ENCODE measurements at regions of chr19 and their contacts with region 1.

Region 1: GRCh38 chr19:37466798-37467607 is at the start of gene ZNF569:
- DNase-seq: peak; percentile 94
- H3K4me3 ChIP-seq: peak within 1 kb of the TSS; percentile 70 to 86
- H3K27ac ChIP-seq: peak within 1 kb of the TSS; percentile 89 to 95
- H3K4me1 ChIP-seq: no peaks in the 10 kb centered on the region
- H3K27me3 ChIP-seq: no peaks in the 10 kb centered on the region
- CTCF ChIP-seq: no peak
- POLR2A ChIP-seq: no peak
- total RNA-seq, gene ZNF569: 4.8 to 6.1 TPM

Region 2: DNA sequence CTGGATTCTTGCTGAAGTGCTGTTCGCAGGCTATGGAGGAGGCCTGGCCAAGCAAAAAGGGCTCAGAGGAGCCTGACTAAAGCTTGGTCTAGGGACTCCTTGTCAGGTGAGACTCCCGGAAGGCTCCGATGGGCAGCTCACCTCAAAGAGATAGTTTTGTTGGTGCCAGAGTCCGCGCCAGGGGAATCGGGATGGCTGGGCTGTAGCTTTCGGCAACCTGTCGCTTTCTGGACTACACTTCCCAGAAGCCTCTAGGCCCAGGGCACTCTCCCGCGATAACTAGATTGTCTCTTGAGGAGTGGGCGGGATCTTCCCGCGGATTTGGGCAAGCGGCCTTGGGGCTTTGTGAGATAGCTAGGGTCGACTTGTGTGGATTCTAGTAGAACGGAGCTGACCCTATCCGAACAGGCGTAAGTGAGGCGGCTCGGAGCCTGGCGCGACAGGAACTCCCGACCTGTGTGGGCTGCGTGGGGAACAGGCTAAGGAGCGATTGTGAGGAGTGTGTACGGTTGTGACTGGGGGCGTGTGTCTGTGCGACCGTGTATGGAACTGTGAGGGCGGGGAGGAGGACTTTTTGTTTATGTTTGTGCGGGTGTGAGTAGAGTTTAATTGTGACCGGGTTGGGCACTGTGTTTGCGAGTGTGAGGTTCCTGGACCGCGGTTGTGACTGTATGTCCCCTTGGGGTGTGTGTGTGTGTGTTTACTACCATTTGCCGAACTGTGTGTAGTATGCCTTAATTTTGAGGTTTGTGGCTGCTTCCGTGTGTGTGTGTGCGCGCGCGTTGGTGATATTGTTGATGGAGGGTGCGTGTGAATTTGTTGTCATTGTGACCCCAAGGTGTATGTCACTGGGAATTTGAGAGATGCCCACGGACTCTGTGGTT is 616.2 kb before region 1 on chr19 and contains the start of gene ZNF345:
- intact Hi-C with region 1: loop called (anchors 5 kb)
- DNase-seq: peak; percentile 93
- H3K4me3 ChIP-seq: peak within 1 kb of the TSS; percentile 56 to 70
- H3K27ac ChIP-seq: peak within 1 kb of the TSS; percentile 87 to 90
- H3K4me1 ChIP-seq: no peaks in the 10 kb centered on the region
- H3K27me3 ChIP-seq: no peaks in the 10 kb centered on the region
- CTCF ChIP-seq: no peak
- POLR2A ChIP-seq: peak; percentile 36
- total RNA-seq, gene ZNF345: 4.1 to 12.6 TPM

Region 3: DNA sequence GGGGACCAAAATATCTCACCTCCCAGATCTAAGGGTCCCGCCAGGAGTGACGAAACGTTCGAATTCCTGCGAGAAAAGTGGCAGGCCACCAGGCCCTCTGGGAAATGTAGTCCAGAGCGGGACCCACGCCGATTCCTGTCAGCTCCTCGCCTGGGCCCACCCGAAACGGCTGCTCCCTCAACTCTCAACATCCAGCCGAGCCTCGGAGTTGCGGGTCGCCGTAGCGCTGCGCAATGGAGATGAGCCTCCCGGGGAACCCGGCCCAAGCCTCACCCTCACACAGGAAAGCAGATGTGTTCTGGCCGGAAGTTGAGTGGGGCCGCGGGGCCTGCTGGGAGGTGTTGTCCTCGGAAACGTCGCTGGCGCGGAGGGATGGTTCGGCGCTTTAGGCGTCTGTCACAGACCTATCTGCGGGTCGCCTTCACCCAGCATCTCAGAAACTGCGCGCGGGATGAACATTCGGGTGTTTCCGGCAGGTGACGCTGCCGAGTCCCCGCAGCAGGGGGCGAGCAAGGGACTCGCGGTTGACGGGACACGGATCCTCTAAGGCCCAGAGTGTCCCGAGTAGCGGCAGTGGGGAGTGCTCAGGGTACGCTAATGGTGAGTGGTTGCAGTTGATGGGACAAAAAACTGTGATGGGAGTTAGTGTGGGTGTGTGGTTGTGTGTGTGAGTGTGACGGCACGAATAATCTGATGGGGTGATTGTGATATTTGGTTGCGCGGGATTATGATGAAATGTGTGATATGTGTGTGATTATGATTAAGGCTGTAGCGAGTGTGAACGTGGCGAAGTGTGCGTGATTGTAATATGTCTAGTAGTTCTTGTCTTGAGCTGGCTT is 550.8 kb before region 1 on chr19 and contains the starts of genes ZNF568 and ZNF829:
- intact Hi-C with region 1: loop called (anchors 5 kb)
- DNase-seq: peak; percentile 88
- H3K4me3 ChIP-seq: peak within 1 kb of the TSS; percentile 74 to 84
- H3K27ac ChIP-seq: peak within 1 kb of the TSS; percentile 95
- H3K4me1 ChIP-seq: no peaks in the 10 kb centered on the region
- H3K27me3 ChIP-seq: no peaks in the 10 kb centered on the region
- CTCF ChIP-seq: peak in 3 of 4 experiments; percentile 41 to 62 (median 53)
- POLR2A ChIP-seq: peak; percentile 8
- total RNA-seq, gene ZNF568: 9.2 to 14.1 TPM
- total RNA-seq, gene ZNF829: 3.2 to 3.3 TPM

Region 4: DNA sequence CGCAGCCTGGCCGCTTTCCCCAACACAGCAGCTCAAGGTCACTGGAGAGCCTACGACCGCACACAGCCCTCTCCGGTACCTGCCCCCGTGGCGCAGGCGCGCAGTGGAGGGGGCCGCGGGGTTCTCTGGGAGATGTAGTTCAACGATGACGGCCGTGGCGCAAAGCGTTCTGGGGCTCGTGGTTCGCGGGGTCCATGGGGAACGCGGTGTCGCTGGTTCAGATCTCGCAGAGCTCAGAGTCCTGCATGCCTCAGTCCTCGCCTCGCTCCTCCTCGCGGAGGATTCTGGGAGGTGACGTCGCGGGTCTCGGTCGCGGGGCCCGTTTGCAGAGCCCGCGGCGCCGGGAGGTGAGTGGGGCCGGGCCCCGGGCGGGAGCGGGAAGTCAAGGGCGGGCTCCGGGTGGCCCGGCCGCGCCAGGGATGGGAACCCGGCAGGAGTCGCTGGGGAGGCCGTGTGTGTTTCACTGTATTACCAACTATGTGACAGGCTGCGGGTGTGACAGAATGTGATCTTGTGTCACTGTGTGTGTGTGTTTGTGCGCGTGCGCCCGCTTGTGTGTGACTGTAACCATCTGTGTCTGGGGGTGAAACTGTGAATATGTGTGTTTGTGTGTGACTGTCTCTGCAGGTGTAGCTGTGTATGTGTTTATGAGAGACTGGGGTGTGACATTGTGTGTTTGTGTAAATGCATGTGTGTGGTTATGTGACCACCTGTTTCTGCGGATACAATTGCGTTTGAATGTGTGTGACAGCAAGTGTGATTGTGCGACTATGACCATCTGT is 95.9 kb before region 1 on chr19 and contains the start of gene ZNF527:
- intact Hi-C with region 1: loop called (anchors 5 kb)
- DNase-seq: peak; percentile 96
- H3K4me3 ChIP-seq: peak within 1 kb of the TSS; percentile 51 to 62
- H3K27ac ChIP-seq: peak within 1 kb of the TSS; percentile 78 to 84
- H3K4me1 ChIP-seq: no peaks in the 10 kb centered on the region
- H3K27me3 ChIP-seq: no peaks in the 10 kb centered on the region
- CTCF ChIP-seq: peak in 2 of 4 experiments; percentile 30 to 34
- POLR2A ChIP-seq: peak; percentile 80
- total RNA-seq, gene ZNF527: 10.7 to 15.0 TPM

Region 5: GRCh38 chr19:37506387-37507166 is 39.6 kb after region 1 on chr19 and contains the start of gene ZNF793:
- intact Hi-C with region 1: loop called (anchors 2 kb)
- DNase-seq: peak; percentile 87
- H3K4me3 ChIP-seq: peak within 1 kb of the TSS; percentile 67 to 69
- H3K27ac ChIP-seq: peak within 1 kb of the TSS; percentile 95 to 96
- H3K4me1 ChIP-seq: no peaks in the 10 kb centered on the region
- H3K27me3 ChIP-seq: no peaks in the 10 kb centered on the region
- CTCF ChIP-seq: no peak
- POLR2A ChIP-seq: peak; percentile 36
- total RNA-seq, gene ZNF793: 5.1 to 13.3 TPM

Region 6: DNA sequence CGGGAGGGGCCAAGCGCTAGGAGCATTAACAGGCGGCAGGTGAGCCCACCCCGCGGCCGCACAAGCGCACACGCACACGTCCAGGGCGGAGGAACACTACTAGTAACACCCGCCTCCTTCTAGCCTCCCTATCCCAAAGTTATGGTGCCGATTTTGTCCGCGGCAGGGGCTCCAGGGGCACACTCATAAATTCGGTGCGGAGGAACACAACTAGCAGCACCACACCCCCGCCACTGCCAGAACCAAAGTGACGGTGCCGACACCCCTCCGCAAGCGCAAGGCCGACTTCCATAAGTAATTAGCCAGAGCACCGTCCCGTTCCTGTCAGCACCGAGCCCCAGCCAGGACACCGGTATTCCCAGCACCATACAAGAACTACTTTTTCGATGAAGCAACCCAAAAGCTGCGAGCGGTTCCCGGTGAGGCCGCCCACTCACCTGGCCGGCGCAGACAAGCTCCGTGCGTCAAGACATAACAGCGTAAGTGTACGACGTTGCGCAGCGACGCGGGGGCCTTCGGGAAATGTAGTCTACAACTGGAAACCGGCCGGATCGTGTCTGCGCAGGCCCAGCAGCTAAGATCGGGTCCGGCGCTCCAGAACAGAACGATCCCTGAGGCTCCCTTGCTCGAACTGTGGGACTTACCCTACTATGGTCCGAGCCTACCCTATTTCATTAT is 127.4 kb after region 1 on chr19 and contains the starts of genes ZNF540 and ZNF571:
- intact Hi-C with region 1: loop called (anchors 2 kb)
- DNase-seq: peak; percentile 97
- H3K4me3 ChIP-seq: peak within 1 kb of the TSS; percentile 47 to 73
- H3K27ac ChIP-seq: peak within 1 kb of the TSS; percentile 94 to 96
- H3K4me1 ChIP-seq: no peaks in the 10 kb centered on the region
- H3K27me3 ChIP-seq: no peaks in the 10 kb centered on the region
- CTCF ChIP-seq: no peak
- POLR2A ChIP-seq: peak; percentile 72
- total RNA-seq, gene ZNF540: 2.9 to 3.1 TPM
- total RNA-seq, gene ZNF571: 4.5 to 34.2 TPM